ENCODE measurements at regions of chr5 and their contacts with region 1.

Region 1: DNA sequence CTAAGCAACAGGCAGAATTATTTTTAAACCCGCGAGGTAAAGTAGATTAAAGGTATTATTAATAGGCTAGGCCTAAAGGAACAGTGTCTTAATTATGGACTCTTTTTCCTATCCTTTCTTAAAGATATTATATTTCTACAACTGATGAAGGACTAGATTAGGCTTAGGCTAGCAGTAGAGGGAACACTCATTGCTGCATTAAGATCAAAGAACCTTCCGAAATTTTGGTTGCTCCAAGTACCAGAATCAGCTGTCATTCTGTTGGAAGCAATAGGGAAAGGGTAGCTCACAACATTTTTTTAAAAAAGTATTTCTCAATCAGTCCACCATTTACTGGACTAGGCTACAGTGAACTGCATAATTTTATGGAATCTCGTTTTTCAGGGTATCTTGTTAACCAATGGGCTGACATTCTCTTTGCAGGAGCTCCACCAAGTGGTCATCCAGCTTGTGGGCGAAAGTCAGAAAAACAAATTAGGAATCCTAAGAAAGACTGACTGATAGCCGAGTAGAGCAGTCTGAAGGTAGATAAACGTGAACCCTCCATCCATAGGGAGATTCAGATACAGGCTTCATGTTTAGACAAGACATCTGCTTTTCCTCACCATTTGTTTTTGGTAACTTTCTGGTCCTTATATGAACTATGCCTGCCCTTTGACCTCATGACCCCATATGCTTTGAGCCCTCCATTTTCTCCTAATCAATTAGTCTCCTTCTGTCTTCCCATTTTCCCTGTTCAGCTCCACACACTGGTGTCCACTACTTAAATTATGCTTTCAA is 103.6 kb upstream of the CHD1 start:
- DNase-seq: peak in 4 of 9 experiments; percentile 22 to 58 (median 36)
- ATAC-seq: peak; percentile 28
- H3K4me3 ChIP-seq: peak overlapping the region; percentile 31 to 51
- H3K4me3 Mint-ChIP-seq: peak overlapping the region; percentile 86
- H3K27ac ChIP-seq: peak overlapping the region; percentile 30 to 95
- H3K27ac Mint-ChIP-seq: peak overlapping the region; percentile 97
- H3K4me1 ChIP-seq: peaks cover 43% of the 10 kb centered on the region
- H3K4me1 Mint-ChIP-seq: peaks cover 65% of the 10 kb centered on the region
- H3K27me3 ChIP-seq: no peaks in the 10 kb centered on the region
- H3K27me3 Mint-ChIP-seq: no peaks in the 10 kb centered on the region
- CTCF ChIP-seq: peak; percentile 25

Region 2: GRCh38 chr5:97968346-97968745 is 1064.1 kb before region 1 on chr5:
- CTCF ChIA-PET with region 1: no interaction called
- POLR2A ChIA-PET with region 1: no interaction called
- intact Hi-C with region 1: no loop called
- DNase-seq: no peak
- ATAC-seq: no peak
- H3K4me3 ChIP-seq: no peak overlapping the region
- H3K4me3 Mint-ChIP-seq: no peak overlapping the region
- H3K27ac ChIP-seq: no peak overlapping the region
- H3K27ac Mint-ChIP-seq: no peak overlapping the region
- H3K4me1 ChIP-seq: no peaks in the 10 kb centered on the region
- H3K4me1 Mint-ChIP-seq: no peaks in the 10 kb centered on the region
- H3K27me3 ChIP-seq: no peaks in the 10 kb centered on the region
- H3K27me3 Mint-ChIP-seq: no peaks in the 10 kb centered on the region
- CTCF ChIP-seq: no peak

Region 3: GRCh38 chr5:98773464-98774191 is 258.8 kb before region 1 on chr5 and contains the start of gene RGMB:
- CTCF ChIA-PET with region 1: no interaction called
- POLR2A ChIA-PET with region 1: no interaction called
- intact Hi-C with region 1: loop called (anchors 2 to 10 kb)
- DNase-seq: peak; percentile 71 to 92 (median 89)
- ATAC-seq: peak; percentile 86
- H3K4me3 ChIP-seq: peak within 1 kb of the TSS; percentile 69 to 70
- H3K4me3 Mint-ChIP-seq: peak within 1 kb of the TSS; percentile 95
- H3K27ac ChIP-seq: peak within 1 kb of the TSS; percentile 37 to 53
- H3K27ac Mint-ChIP-seq: peak within 1 kb of the TSS; percentile 87
- H3K4me1 ChIP-seq: peaks cover 41% of the 10 kb centered on the region
- H3K4me1 Mint-ChIP-seq: peaks cover 56% of the 10 kb centered on the region
- H3K27me3 ChIP-seq: peaks cover 0 to 12% of the 10 kb centered on the region in 2 experiments
- H3K27me3 Mint-ChIP-seq: peaks cover 24% of the 10 kb centered on the region
- CTCF ChIP-seq: no peak
- total RNA-seq, gene RGMB: 5.8 to 6.6 TPM

Region 4: DNA sequence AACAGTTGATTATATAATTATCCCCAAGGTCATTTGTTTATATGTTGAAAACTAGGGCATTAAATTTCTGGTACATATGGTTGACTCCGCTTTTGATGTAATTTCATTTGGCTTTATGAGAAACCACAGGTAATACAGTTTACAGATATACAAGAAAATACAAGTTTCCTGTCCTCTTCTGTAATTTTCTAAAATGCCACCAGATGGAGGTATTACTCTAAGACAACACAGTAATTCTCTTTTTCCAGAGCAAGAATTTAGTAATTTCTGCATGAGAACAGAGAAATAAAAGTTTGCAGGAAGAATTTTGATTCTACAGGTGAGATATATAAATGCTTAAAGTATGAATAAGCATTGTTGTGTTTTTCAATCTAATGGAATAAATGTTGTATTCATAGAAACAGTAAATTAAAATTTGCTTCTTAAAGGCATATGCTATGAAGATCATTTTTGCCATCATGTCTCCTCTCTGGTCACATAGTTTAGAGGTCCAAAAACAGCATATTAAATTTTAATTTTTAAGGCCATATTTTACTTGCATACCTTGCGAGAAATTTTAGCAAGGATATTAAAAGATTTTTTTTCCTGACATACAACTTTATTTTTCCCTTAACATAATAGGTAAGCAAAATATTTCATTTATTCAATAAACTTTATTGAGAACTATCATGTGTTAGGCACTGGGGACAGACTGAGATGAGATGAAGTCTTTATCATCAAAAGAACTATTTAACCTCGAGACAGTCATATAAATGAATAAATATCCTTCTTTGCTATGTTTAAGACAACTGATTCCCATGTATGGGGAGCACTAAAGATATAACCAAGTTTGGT is 126.3 kb before region 1 on chr5:
- CTCF ChIA-PET with region 1: interaction called, 8 read pairs
- POLR2A ChIA-PET with region 1: no interaction called
- intact Hi-C with region 1: loop called in 1 of 2 experiments (anchors 1 kb)
- DNase-seq: peak in 2 of 9 experiments; percentile 62 to 72
- ATAC-seq: peak; percentile 67
- H3K4me3 ChIP-seq: no peak overlapping the region
- H3K4me3 Mint-ChIP-seq: no peak overlapping the region
- H3K27ac ChIP-seq: peak overlapping the region in 1 of 2 experiments; percentile 34
- H3K27ac Mint-ChIP-seq: no peak overlapping the region
- H3K4me1 ChIP-seq: peaks cover 20% of the 10 kb centered on the region
- H3K4me1 Mint-ChIP-seq: peaks cover 51% of the 10 kb centered on the region
- H3K27me3 ChIP-seq: no peaks in the 10 kb centered on the region
- H3K27me3 Mint-ChIP-seq: no peaks in the 10 kb centered on the region
- CTCF ChIP-seq: peak; percentile 96

Region 5: GRCh38 chr5:98997000-98997399 is 35.4 kb before region 1 on chr5:
- CTCF ChIA-PET with region 1: no interaction called
- POLR2A ChIA-PET with region 1: no interaction called
- intact Hi-C with region 1: loop called in 1 of 2 experiments (anchors 5 kb)
- DNase-seq: no peak
- ATAC-seq: no peak
- H3K4me3 ChIP-seq: no peak overlapping the region
- H3K4me3 Mint-ChIP-seq: no peak overlapping the region
- H3K27ac ChIP-seq: no peak overlapping the region
- H3K27ac Mint-ChIP-seq: no peak overlapping the region
- H3K4me1 ChIP-seq: no peaks in the 10 kb centered on the region
- H3K4me1 Mint-ChIP-seq: peaks cover 13% of the 10 kb centered on the region
- H3K27me3 ChIP-seq: no peaks in the 10 kb centered on the region
- H3K27me3 Mint-ChIP-seq: no peaks in the 10 kb centered on the region
- CTCF ChIP-seq: no peak

Region 6: GRCh38 chr5:99060306-99061261 is 28.2 kb after region 1 on chr5:
- CTCF ChIA-PET with region 1: interaction called, 5 read pairs
- POLR2A ChIA-PET with region 1: interaction called, 3 read pairs
- intact Hi-C with region 1: loop called in 1 of 2 experiments (anchors 1 kb)
- DNase-seq: peak; percentile 79 to 93 (median 86)
- ATAC-seq: peak; percentile 76
- H3K4me3 ChIP-seq: no peak overlapping the region
- H3K4me3 Mint-ChIP-seq: peak overlapping the region; percentile 29
- H3K27ac ChIP-seq: no peak overlapping the region
- H3K27ac Mint-ChIP-seq: no peak overlapping the region
- H3K4me1 ChIP-seq: peaks cover 5% of the 10 kb centered on the region
- H3K4me1 Mint-ChIP-seq: peaks cover 5% of the 10 kb centered on the region
- H3K27me3 ChIP-seq: no peaks in the 10 kb centered on the region
- H3K27me3 Mint-ChIP-seq: peaks cover 8% of the 10 kb centered on the region
- CTCF ChIP-seq: peak; percentile 95

Region 7: DNA sequence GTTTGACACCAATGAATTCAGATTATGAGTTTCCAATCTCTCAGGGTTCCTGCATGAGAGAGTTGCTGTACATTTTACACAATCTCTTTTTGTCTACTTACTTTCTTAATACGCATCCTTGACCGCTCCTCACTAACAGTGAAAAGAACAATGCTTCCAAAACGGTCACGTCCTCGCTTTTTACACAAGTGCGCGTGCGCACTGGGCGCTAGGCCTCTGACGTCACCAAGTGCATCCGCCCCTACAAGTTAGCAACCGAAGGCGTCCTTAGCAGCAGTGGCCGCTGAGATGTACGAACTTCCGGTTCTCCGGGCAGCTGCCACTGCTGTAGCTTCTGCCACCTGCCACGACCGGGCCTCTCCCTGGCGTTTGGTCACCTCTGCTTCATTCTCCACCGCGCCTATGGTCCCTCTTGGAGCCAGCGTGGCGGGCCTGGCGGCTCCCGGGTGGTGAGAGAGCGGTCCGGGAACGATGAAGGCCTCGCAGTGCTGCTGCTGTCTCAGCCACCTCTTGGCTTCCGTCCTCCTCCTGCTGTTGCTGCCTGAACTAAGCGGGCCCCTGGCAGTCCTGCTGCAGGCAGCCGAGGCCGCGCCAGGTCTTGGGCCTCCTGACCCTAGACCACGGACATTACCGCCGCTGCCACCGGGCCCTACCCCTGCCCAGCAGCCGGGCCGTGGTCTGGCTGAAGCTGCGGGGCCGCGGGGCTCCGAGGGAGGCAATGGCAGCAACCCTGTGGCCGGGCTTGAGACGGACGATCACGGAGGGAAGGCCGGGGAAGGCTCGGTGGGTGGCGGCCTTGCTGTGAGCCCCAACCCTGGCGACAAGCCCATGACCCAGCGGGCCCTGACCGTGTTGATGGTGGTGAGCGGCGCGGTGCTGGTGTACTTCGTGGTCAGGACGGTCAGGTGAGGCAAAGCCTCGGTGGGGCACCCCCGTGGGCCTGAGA is 1502.9 kb after region 1 on chr5 and contains the start of gene FAM174A:
- CTCF ChIA-PET with region 1: no interaction called
- POLR2A ChIA-PET with region 1: no interaction called
- intact Hi-C with region 1: loop called in 1 of 2 experiments (anchors 5 kb)
- DNase-seq: peak; percentile 88 to 98 (median 94)
- ATAC-seq: peak; percentile 86
- H3K4me3 ChIP-seq: peak within 1 kb of the TSS; percentile 92 to 93
- H3K4me3 Mint-ChIP-seq: peak within 1 kb of the TSS; percentile 88
- H3K27ac ChIP-seq: peak within 1 kb of the TSS; percentile 90 to 93
- H3K27ac Mint-ChIP-seq: peak within 1 kb of the TSS; percentile 96
- H3K4me1 ChIP-seq: peaks cover 16% of the 10 kb centered on the region
- H3K4me1 Mint-ChIP-seq: peaks cover 39% of the 10 kb centered on the region
- H3K27me3 ChIP-seq: no peaks in the 10 kb centered on the region
- H3K27me3 Mint-ChIP-seq: no peaks in the 10 kb centered on the region
- CTCF ChIP-seq: no peak
- total RNA-seq, gene FAM174A: 4.9 to 6.5 TPM

Measured in CD8-positive, alpha-beta T cell (primary cell).